Activated T-helper 1 cell treated with anti-CD3 and anti-CD28 coated beads, Interleukin-12 subunit alpha, Interleukin-12 subunit beta, Interleukin-2, Interleukin-4 antibody, amounts not matched to agents 30 ng/mL and 10 ng/mL and 1 ng/mL, durations not matched to agents 14 hours and 24 hours and 36 hours (primary cell): ENCODE measurements at regions of chr2 and their contacts with region 1.

Region 1: DNA sequence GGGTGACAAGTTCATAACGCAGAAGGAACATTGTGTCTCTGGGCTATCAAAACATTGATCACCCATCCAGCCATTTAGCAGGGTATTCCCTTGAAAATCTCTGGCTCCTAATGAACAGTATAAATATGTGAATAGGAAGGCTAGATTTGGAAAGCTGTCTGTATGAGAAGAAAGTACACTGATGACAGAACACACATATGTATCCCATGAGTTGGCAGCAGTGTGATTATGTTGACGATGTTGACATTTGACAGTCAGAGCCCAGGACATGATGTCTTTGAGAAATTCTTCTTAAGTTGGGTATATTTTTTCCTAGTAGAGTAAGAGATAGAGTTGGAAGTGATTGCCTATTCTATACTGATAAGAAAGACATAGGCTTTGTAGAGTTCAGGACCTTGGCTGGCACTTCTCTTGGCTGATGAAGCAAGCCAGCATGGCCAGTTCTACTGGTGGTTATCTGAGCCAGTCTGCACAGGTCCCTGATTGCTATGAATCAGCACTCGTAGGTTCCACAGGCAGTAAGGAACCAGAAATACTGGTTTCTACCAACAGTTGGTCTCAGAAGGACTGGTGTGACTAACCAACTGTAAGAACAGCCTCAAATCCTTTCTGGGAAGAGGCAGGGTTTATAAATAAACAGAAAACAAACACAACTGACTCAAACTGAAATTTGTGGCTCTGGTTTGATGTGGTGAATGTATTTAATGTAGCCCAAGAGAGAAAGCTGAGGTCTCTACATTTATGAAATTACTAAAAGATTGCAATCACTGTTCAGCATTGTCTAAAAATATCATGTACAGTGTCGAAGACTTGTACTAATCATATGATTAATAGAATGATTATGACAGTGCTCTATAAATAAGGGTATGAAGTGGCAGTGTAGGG is 43.9 kb upstream of the RAPH1 start:
- DNase-seq: peak; percentile 64
- H3K4me3 Mint-ChIP-seq: peak overlapping the region; percentile 38
- H3K27ac Mint-ChIP-seq: peak overlapping the region; percentile 46
- H3K4me1 Mint-ChIP-seq: peaks cover 49% of the 10 kb centered on the region
- H3K27me3 Mint-ChIP-seq: peaks cover 40% of the 10 kb centered on the region

Region 2: DNA sequence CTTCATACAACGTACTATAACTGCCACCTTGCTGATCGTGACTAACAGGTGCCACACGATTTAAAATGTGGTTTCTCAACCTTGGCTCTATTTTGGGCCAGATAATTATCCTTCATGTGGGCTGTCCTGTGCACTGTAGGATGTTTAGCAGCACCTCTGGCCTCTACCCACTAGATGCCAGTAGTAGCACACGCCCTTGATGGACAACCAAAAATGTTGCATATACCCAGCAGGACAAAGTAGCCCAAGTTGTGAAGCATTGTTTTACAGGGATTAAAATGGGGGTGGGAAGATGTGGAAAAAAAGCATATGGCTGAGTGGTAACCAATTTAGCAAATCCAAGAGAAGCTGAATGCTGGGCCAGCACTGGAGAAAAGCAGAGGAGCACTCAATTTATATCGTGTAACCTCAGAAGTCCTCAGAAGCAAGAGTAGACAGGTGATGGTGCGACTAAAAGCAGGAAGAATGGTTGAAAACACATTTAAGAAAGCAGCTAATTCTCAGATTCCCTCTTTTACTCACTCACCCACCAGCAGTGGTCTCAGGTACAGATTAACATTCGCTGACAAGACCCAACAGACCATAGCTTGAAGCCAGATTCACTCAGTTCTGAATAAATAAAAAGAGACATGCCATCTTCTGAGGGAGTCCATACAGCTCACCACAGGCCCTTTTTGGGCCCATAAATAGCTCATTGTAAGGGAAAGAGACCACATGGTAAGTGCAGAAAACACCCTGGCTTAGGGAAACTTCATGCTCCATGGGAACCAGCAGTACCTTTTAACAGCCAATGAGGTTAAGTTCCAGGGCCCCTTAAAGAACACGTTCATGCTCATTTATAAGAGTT is 94.5 kb before region 1 on chr2:
- intact Hi-C with region 1: loop called (anchors 5 kb)
- DNase-seq: peak; percentile 30
- H3K4me3 Mint-ChIP-seq: no peak overlapping the region
- H3K27ac Mint-ChIP-seq: no peak overlapping the region
- H3K4me1 Mint-ChIP-seq: peaks cover 6% of the 10 kb centered on the region
- H3K27me3 Mint-ChIP-seq: no peaks in the 10 kb centered on the region

Region 3: DNA sequence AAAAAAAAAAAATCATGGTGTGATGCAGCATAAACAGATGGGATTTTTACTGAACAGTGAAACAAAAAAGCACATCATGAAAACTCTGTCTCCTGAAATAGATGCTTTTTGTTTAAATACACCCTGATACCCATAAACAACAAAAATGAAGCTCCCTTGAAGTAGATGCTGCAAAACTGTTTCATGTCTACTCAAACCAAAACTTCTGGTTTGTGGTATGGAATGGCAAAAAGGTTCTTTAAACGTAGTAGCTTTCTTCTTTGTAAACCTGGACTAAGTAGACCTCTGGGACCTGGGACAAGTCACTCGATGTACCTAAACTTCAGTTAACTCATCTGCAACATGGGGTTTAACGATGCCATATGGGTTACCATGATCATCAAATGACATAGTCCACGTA is 20.5 kb after region 1 on chr2:
- intact Hi-C with region 1: loop called (anchors 1 kb)
- DNase-seq: no peak
- H3K4me3 Mint-ChIP-seq: peak overlapping the region; percentile 37
- H3K27ac Mint-ChIP-seq: no peak overlapping the region
- H3K4me1 Mint-ChIP-seq: peaks cover 39% of the 10 kb centered on the region
- H3K27me3 Mint-ChIP-seq: peaks cover 59% of the 10 kb centered on the region

Region 4: DNA sequence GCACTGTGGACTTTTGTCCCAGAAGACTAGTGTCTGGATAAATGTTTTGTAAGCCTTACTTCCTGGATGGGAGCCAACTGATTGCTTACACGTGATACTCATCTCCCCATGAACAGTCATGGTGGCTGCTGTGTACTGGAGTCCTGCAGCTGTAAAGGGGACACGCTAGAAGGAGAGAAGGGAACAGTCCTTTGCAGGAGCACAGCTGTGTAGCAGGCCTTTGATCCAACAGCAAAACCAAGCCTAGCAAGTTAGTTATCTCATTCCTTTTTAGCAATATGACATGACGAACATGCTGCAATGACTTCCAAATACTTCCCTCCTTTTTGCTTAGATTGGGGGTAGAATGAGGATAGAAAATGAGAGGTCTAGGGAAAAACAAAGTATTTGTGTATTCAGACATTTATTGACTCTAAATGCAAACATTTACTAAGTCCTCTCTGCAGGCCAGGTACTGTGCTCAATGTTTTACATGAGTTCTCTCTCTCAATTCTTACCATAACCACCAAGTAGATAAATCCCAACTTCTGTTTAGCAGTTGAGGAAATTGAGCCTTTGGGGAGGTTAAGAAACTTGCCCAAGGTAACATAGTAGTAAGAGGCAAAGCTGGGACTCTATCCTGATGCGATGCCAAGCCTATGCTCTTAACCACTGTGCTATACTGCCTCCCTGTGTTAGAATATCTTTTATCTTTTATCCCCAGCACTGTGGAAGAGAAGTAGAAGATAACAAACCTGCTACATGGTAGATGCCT is 72.0 kb after region 1 on chr2:
- intact Hi-C with region 1: no loop called
- DNase-seq: no peak
- H3K4me3 Mint-ChIP-seq: no peak overlapping the region
- H3K27ac Mint-ChIP-seq: no peak overlapping the region
- H3K4me1 Mint-ChIP-seq: peaks cover 36% of the 10 kb centered on the region
- H3K27me3 Mint-ChIP-seq: peaks cover 5% of the 10 kb centered on the region

Region 5: DNA sequence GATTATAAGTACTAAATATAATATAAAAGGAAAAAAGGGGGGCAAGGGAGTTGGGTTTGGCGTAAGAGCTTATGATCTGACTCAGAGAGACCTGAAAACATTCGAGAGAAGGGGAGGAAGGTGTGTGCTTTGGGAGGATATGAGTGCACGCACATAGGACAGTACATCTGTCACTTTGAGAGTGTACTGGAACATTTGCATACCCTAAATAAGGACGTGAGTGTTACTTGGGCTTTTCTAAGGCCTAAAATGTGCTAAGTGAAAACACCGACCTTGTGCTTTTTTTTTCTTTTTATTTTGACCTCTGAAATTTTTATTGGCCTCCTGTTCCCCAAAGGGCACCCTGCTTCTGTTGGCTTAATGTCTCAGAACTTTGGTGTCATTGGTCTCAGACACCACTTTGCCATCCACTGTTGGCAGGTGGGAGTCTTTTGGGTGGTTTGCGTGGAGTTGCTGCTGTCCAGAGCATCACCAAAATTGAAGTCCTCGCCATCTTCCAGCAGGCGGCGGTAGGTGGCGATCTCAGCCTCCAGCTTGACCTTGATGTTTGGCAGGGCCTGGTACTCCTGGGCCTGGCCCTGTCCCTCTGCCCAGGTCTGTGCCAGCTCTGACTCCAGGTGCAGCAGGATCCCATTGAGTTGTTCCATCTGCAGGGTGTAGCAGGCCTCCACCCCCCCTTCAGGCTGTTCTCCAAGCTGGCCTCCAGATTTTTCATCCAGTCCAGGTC is 185.1 kb after region 1 on chr2:
- intact Hi-C with region 1: loop called (anchors 1 kb)
- DNase-seq: peak; percentile 20
- H3K4me3 Mint-ChIP-seq: peak overlapping the region; percentile 22
- H3K27ac Mint-ChIP-seq: peak overlapping the region; percentile 95
- H3K4me1 Mint-ChIP-seq: peaks cover 66% of the 10 kb centered on the region
- H3K27me3 Mint-ChIP-seq: no peaks in the 10 kb centered on the region

Region 6: GRCh38 chr2:203871371-203871983 is 292.5 kb after region 1 on chr2:
- intact Hi-C with region 1: loop called (anchors 1 kb)
- DNase-seq: peak; percentile 67
- H3K4me3 Mint-ChIP-seq: peak overlapping the region; percentile 95
- H3K27ac Mint-ChIP-seq: peak overlapping the region; percentile 99
- H3K4me1 Mint-ChIP-seq: peaks cover 82% of the 10 kb centered on the region
- H3K27me3 Mint-ChIP-seq: no peaks in the 10 kb centered on the region

Region 7: GRCh38 chr2:203934041-203934492 is 355.1 kb after region 1 on chr2:
- intact Hi-C with region 1: loop called (anchors 1 kb)
- DNase-seq: peak; percentile 39
- H3K4me3 Mint-ChIP-seq: peak overlapping the region; percentile 73
- H3K27ac Mint-ChIP-seq: peak overlapping the region; percentile 93
- H3K4me1 Mint-ChIP-seq: peaks cover 59% of the 10 kb centered on the region
- H3K27me3 Mint-ChIP-seq: no peaks in the 10 kb centered on the region